CD4-positive, alpha-beta T cell (primary cell): ENCODE measurements at regions of chr4 and their contacts with region 1.

Region 1: DNA sequence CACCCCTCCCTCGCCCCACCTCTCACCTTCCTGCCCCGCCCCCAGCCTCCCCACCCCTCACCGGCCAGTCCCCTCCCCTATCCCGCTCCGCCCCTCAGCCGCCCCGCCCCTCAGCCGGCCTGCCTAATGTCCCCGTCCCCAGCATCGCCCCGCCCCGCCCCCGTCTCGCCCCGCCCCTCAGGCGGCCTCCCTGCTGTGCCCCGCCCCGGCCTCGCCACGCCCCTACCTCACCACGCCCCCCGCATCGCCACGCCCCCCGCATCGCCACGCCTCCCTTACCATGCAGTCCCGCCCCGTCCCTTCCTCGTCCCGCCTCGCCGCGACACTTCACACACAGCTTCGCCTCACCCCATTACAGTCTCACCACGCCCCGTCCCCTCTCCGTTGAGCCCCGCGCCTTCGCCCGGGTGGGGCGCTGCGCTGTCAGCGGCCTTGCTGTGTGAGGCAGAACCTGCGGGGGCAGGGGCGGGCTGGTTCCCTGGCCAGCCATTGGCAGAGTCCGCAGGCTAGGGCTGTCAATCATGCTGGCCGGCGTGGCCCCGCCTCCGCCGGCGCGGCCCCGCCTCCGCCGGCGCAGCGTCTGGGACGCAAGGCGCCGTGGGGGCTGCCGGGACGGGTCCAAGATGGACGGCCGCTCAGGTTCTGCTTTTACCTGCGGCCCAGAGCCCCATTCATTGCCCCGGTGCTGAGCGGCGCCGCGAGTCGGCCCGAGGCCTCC is at the starts of genes HTT and HTT-AS:
- DNase-seq: peak; percentile 93 to 99 (median 98)
- ATAC-seq: peak; percentile 84
- H3K4me3 ChIP-seq: peak within 1 kb of the TSS; percentile 80
- H3K4me3 Mint-ChIP-seq: peak within 1 kb of the TSS; percentile 92
- H3K27ac ChIP-seq: peak within 1 kb of the TSS; percentile 72 to 87
- H3K27ac Mint-ChIP-seq: peak within 1 kb of the TSS; percentile 86
- H3K4me1 ChIP-seq: peaks cover 23% of the 10 kb centered on the region
- H3K4me1 Mint-ChIP-seq: peaks cover 26% of the 10 kb centered on the region
- H3K27me3 ChIP-seq: no peaks in the 10 kb centered on the region
- H3K27me3 Mint-ChIP-seq: no peaks in the 10 kb centered on the region
- CTCF ChIP-seq: no peak
- total RNA-seq, gene HTT: 56.9 to 62.6 TPM
- total RNA-seq, gene HTT-AS: not detected

Region 2: GRCh38 chr4:1579901-1580691 is 1494.1 kb before region 1 on chr4:
- CTCF ChIA-PET with region 1: no interaction called
- POLR2A ChIA-PET with region 1: no interaction called
- intact Hi-C with region 1: loop called in 1 of 2 experiments (anchors 10 kb)
- DNase-seq: peak; percentile 88 to 97 (median 93)
- ATAC-seq: peak; percentile 82
- H3K4me3 ChIP-seq: peak overlapping the region; percentile 73
- H3K4me3 Mint-ChIP-seq: peak overlapping the region; percentile 86
- H3K27ac ChIP-seq: peak overlapping the region in 1 of 2 donors; percentile 65
- H3K27ac Mint-ChIP-seq: peak overlapping the region; percentile 63
- H3K4me1 ChIP-seq: peaks cover 14% of the 10 kb centered on the region
- H3K4me1 Mint-ChIP-seq: no peaks in the 10 kb centered on the region
- H3K27me3 ChIP-seq: no peaks in the 10 kb centered on the region
- H3K27me3 Mint-ChIP-seq: no peaks in the 10 kb centered on the region
- CTCF ChIP-seq: no peak

Region 3: DNA sequence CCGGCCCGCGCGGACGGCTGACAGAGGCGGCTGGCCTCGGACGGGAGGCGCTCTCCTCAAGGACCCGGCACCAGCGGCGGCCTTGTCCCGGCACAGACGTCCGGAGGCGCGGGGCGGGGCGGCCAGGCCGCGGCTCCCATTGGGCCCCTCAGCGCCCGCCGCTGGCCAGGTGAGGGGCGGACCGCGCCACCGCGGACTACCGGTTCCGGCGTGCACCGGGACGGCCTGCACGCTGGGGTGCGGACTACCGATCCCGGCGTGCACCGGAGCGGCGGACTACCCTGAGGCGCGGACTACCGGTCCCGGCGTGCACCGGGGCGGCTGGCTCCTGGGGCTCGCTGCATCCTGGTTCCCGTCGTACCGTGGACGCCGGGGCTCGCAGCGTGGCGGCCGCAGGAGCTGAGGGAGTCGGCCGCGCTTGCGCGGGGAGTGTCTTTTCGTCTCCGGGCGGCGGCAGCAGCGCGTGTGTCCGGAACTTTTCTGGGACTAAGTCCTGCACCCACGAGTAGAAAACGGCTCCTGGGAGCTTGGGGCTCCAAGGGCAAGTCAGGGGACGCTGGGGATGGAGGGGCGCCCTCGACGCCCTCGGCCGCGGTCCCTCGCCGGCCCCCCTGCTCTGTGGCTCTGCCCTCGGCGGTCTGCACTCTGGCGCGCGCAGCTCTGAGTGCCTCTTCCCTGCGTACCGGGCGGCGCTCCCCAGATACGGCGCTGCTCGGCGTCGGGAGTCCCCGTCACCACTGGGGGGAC is 1218.0 kb before region 1 on chr4 and contains the start of gene LETM1:
- CTCF ChIA-PET with region 1: no interaction called
- POLR2A ChIA-PET with region 1: no interaction called
- intact Hi-C with region 1: loop called in 1 of 2 experiments (anchors 10 kb)
- DNase-seq: peak; percentile 81 to 97 (median 91)
- ATAC-seq: peak; percentile 97
- H3K4me3 ChIP-seq: peak within 1 kb of the TSS; percentile 75
- H3K4me3 Mint-ChIP-seq: peak within 1 kb of the TSS; percentile 94
- H3K27ac ChIP-seq: peak within 1 kb of the TSS in 1 of 2 donors; percentile 5
- H3K27ac Mint-ChIP-seq: peak within 1 kb of the TSS; percentile 76
- H3K4me1 ChIP-seq: peaks cover 32% of the 10 kb centered on the region
- H3K4me1 Mint-ChIP-seq: peaks cover 40% of the 10 kb centered on the region
- H3K27me3 ChIP-seq: no peaks in the 10 kb centered on the region
- H3K27me3 Mint-ChIP-seq: no peaks in the 10 kb centered on the region
- CTCF ChIP-seq: no peak
- total RNA-seq, gene LETM1: 21.2 to 25.2 TPM

Region 4: GRCh38 chr4:2755837-2756694 is 318.2 kb before region 1 on chr4 and contains the start of gene TNIP2:
- CTCF ChIA-PET with region 1: no interaction called
- POLR2A ChIA-PET with region 1: interaction called, 3 read pairs
- intact Hi-C with region 1: loop called in 1 of 2 experiments (anchors 2 kb)
- DNase-seq: peak; percentile 63 to 91 (median 76)
- ATAC-seq: peak; percentile 78
- H3K4me3 ChIP-seq: peak within 1 kb of the TSS; percentile 68
- H3K4me3 Mint-ChIP-seq: peak within 1 kb of the TSS; percentile 90
- H3K27ac ChIP-seq: peak within 1 kb of the TSS; percentile 29 to 56
- H3K27ac Mint-ChIP-seq: peak within 1 kb of the TSS; percentile 73
- H3K4me1 ChIP-seq: peaks cover 33% of the 10 kb centered on the region
- H3K4me1 Mint-ChIP-seq: peaks cover 31% of the 10 kb centered on the region
- H3K27me3 ChIP-seq: no peaks in the 10 kb centered on the region
- H3K27me3 Mint-ChIP-seq: no peaks in the 10 kb centered on the region
- CTCF ChIP-seq: no peak
- total RNA-seq, gene TNIP2: 43.8 to 49.1 TPM

Region 5: DNA sequence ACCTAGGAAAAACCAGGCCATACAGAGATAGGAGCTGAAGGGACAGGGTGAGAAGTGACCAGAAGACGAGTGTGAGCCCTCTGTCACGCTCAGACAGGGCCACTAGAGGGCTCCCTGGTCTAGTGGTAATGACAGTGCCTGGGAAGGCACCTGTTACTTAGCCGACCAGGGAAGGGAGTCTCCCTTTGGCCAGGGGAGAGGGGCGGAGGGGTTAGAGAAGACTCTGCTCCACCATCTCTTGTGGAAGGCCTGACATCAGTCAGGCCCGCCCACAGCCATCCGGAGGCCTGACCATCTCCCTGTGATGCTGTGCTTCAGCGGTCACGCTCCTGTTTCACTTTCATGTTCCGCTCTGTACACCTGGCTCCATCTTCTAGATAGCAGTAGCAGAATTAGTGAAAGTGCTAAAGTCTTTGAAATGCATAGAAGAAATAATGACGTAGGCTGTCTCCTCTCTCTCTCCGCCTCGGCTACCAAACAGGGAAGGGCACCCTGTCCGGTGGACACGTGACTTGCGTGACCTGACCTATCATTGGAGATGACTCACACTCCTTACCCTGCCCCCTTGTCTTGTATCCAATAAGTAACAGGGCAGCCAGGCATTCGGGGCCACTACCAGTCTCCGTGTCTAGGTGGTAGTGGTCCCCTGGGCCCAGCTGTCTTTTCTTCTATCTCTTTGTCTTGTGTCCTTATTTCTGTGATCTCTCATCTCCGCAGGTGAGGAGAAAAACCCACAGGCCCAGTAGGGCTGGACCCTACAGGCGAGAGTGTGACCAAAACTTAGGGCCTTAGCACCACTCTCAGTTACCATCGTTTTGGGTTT is 26.6 kb before region 1 on chr4:
- CTCF ChIA-PET with region 1: no interaction called
- POLR2A ChIA-PET with region 1: interaction called, 3 read pairs
- intact Hi-C with region 1: loop called (anchors 2 kb)
- DNase-seq: peak; percentile 31 to 90 (median 55)
- ATAC-seq: peak; percentile 59
- H3K4me3 ChIP-seq: peak overlapping the region; percentile 57
- H3K4me3 Mint-ChIP-seq: peak overlapping the region; percentile 86
- H3K27ac ChIP-seq: peak overlapping the region in 1 of 2 donors; percentile 45
- H3K27ac Mint-ChIP-seq: peak overlapping the region; percentile 68
- H3K4me1 ChIP-seq: peaks cover 41% of the 10 kb centered on the region
- H3K4me1 Mint-ChIP-seq: peaks cover 35% of the 10 kb centered on the region
- H3K27me3 ChIP-seq: no peaks in the 10 kb centered on the region
- H3K27me3 Mint-ChIP-seq: no peaks in the 10 kb centered on the region
- CTCF ChIP-seq: peak; percentile 76

Region 6: GRCh38 chr4:3898098-3898497 is 823.9 kb after region 1 on chr4:
- CTCF ChIA-PET with region 1: no interaction called
- POLR2A ChIA-PET with region 1: no interaction called
- intact Hi-C with region 1: no loop called
- DNase-seq: no peak
- ATAC-seq: no peak
- H3K4me3 ChIP-seq: no peak overlapping the region
- H3K4me3 Mint-ChIP-seq: no peak overlapping the region
- H3K27ac ChIP-seq: no peak overlapping the region
- H3K27ac Mint-ChIP-seq: no peak overlapping the region
- H3K4me1 ChIP-seq: no peaks in the 10 kb centered on the region
- H3K4me1 Mint-ChIP-seq: no peaks in the 10 kb centered on the region
- H3K27me3 ChIP-seq: no peaks in the 10 kb centered on the region
- H3K27me3 Mint-ChIP-seq: peaks cover 30% of the 10 kb centered on the region
- CTCF ChIP-seq: no peak